Head of caudate nucleus (tissue), 42 donors: ENCODE measurements at regions of chr17 and their contacts with region 1.

Region 1: GRCh38 chr17:32546031-32546444 is 59.2 kb downstream of the CDK5R1 start:
- DNase-seq: peak; percentile 58 to 89 (median 76)

Region 2: GRCh38 chr17:32495359-32496231 is 50.4 kb before region 1 on chr17:
- intact Hi-C with region 1: loop called (anchors 10 kb)
- DNase-seq: peak in 27 of 42 donors; percentile 19 to 79 (median 61)